Thyroid gland (tissue), 4 donors: ENCODE measurements at regions of chr12 and their contacts with region 1.

Region 1: GRCh38 chr12:122123051-122123760 is 44.6 kb downstream of the MLXIP start:
- DNase-seq: peak; percentile 68 to 71
- H3K4me3 ChIP-seq: no peak overlapping the region
- H3K27ac ChIP-seq: peak overlapping the region; percentile 7 to 71 (median 37)
- H3K4me1 ChIP-seq: peaks cover 24 to 35% of the 10 kb centered on the region in 2 donors
- H3K27me3 ChIP-seq: no peaks in the 10 kb centered on the region
- CTCF ChIP-seq: peak; percentile 38 to 85 (median 72)
- POLR2A ChIP-seq: no peak

Region 2: DNA sequence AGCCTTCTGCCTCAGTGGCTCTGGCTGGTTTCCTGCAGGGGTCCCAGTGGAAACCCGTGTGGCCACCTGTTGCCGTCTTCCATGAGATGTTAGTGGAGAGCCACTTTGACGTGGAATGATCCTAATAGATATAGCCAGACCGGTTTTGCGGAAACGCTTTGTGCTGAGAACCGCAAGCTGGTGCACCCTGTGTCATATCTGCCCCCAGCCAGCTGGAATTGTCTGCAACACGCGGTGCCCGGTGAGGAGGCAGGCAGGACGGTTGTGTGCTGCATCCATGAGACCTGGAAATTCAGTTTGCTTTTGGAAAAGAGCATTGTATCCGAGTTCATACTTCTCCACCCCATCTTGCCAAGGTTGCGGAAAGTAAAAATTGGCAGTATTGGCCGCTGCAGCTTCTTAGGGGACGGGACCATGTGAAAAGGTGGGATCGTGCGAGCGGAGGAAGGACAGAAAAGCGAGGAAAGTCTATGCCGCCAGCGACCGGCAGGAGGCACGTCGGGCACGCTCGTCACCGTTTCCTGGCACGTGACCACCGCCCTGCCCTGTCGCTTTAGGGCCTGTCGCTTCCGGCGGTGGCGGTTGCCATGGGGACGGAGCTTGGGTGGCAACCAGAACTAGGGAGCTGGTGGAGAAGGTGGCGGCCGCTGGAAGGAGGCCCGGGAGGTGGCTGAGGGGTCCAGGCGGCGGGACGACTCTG is 205.1 kb before region 1 on chr12 and contains the start of gene CFAP251:
- intact Hi-C with region 1: loop called (anchors 5 kb)
- DNase-seq: peak; percentile 100
- H3K4me3 ChIP-seq: peak within 1 kb of the TSS; percentile 3 to 51 (median 24)
- H3K27ac ChIP-seq: peak within 1 kb of the TSS in 1 of 3 donors; percentile 67
- H3K4me1 ChIP-seq: peaks cover 5 to 8% of the 10 kb centered on the region in 2 donors
- H3K27me3 ChIP-seq: no peaks in the 10 kb centered on the region
- CTCF ChIP-seq: peak; percentile 45 to 98 (median 79)
- POLR2A ChIP-seq: peak in 1 of 2 donors; percentile 61
- total RNA-seq, gene CFAP251: 17.7 to 27.0 (median 23.7) TPM

Region 3: DNA sequence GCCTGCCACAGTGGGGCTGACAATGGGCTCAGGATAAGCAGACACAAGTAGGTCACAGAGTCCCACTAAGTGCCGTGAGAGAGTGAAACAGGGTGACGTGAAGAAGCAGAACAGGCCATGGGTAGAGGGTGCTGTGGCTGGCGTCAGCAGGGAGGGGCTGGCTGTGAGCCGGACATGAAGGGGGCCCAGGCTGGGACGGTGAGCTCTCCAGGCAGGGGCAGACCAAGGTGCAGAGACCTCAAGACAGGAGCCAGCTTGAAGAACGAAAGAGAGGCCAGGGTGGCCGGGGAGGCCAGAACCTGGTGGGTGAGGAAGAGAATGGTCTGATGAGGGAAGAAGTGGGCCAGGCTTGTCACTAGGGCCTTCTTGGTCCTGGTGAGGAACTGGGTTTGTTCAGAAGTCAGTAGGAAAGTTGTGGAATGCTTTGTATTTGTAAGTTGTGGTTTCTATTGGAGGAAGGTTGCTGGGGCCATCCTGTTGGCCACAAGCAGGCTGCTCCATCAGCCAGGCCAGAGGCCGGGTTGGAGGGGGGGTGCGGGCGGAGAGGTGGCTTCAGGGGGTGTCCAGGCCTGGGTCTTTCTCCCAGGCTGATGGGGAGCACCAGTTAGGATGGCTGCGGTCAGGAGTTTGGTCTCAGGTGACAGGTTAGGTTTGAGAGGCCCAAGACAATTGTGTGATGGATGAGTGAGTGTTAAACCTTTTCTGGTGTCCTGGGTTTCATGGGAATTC is 66.0 kb before region 1 on chr12:
- intact Hi-C with region 1: loop called (anchors 2 kb)
- DNase-seq: no peak
- H3K4me3 ChIP-seq: no peak overlapping the region
- H3K27ac ChIP-seq: peak overlapping the region in 1 of 3 donors; percentile 12
- H3K4me1 ChIP-seq: peaks cover 3 to 14% of the 10 kb centered on the region in 2 donors
- H3K27me3 ChIP-seq: no peaks in the 10 kb centered on the region
- CTCF ChIP-seq: no peak
- POLR2A ChIP-seq: no peak

Region 4: DNA sequence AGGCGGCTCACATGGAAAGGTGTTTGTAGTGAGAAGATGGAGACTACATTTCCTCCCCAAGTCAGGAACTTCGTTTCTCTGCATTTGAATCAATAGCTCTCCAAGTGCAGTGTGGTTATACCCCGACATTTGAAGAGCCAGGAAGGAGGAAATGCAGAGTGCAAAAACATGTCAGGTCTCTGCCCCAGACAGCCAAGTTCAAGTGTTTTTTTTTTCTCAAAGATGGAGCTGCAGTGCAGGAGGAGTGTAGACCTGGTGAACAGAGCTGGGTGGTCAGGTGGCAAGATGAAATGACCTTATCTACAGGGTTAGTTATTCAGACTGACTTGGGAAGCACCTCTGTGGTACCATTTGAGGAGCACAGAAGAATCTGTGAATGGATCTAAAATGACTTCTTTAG is 23.4 kb before region 1 on chr12:
- intact Hi-C with region 1: loop called (anchors 2 kb)
- DNase-seq: no peak
- H3K4me3 ChIP-seq: no peak overlapping the region
- H3K27ac ChIP-seq: peak overlapping the region; percentile 85 to 94 (median 88)
- H3K4me1 ChIP-seq: peaks cover 68 to 72% of the 10 kb centered on the region in 2 donors
- H3K27me3 ChIP-seq: no peaks in the 10 kb centered on the region
- CTCF ChIP-seq: no peak
- POLR2A ChIP-seq: no peak

Region 5: DNA sequence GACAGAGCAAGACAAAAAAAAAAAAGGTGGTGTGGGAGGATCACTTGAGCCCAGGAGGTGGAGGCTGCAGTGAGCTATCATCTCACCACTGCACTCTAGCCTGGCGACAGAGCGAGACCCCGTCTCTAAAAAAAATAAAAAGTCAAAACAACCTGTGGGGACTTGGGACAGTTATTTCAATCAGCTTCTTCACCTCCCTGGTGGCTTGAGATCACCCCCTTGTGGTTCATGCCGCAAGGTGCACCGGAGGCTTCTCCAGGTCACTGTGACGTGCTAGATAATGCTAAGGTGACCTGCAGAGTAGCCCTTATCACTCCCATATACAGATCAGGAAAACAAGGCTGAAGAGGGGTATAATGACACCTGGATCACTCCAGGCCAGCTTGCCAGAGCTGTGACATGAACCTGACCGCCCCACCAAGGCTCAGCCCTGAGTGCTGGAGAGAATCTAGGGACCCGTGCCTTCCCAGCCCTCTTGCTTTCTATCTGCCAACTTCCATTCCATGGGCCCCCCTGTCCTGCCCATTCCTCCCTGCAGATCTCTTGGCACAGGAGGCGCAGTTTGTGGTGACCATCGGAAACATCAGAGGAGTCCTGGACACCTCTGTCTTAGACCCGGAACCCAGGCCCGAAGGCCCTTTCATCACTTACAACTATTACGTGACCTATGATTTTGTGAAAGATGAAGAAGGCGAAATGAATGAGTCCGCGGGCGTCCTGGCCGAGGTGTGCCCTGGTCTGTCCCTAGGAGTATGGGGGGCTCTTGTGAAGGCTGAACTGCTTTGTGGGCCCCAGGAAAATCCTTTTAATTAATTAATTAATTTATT is 67.8 kb after region 1 on chr12:
- intact Hi-C with region 1: loop called (anchors 5 kb)
- DNase-seq: peak; percentile 70 to 79
- H3K4me3 ChIP-seq: no peak overlapping the region
- H3K27ac ChIP-seq: no peak overlapping the region
- H3K4me1 ChIP-seq: no peaks in the 10 kb centered on the region
- H3K27me3 ChIP-seq: no peaks in the 10 kb centered on the region
- CTCF ChIP-seq: peak; percentile 35 to 81 (median 77)
- POLR2A ChIP-seq: no peak